HAP-1 (cell line): ENCODE measurements at regions of chr5 and their contacts with region 1.

Region 1: GRCh38 chr5:131165119-131165727 is at the start of gene HINT1:
- DNase-seq: peak; percentile 86 to 96
- H3K4me3 ChIP-seq: peak within 1 kb of the TSS; percentile 71
- H3K4me1 ChIP-seq: peaks cover 8% of the 10 kb centered on the region
- H3K27me3 ChIP-seq: no peaks in the 10 kb centered on the region

Region 2: DNA sequence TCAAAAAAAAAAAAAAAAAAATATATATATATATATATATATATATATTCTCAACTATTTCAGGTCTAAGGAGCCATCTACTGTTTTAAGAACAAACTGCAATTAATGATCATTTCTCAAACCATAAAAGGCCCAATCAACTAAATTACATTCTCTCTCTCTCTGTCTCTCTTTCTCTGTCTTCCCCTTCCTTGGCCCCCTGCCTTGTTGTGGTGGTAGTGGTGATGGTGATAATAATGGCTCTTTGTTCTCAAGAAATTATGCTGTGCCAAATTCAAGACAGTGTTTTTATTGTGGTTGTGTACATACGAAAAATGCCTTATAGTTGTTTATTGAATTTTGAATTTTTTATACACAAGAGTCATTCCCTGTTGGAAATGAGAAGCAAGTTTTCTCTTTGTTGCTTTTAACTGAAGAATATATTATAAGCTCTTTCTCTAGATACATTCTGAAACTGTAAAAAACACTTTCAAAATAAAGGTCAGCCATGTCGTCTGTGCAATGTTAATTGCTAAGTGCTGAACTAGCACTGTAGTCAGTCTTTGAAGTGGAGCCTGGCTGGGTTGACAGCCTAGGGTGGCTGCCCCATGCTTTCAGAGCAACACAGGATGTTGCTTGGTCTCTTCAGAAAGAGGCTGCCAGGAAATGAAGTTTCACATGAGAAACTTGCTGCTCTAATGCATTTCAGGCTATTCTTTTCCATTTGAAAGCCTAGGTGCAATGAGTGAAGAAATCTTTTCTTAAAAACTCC is 96.2 kb before region 1 on chr5:
- in situ Hi-C with region 1: no loop called
- DNase-seq: no peak
- H3K4me3 ChIP-seq: no peak overlapping the region
- H3K4me1 ChIP-seq: no peaks in the 10 kb centered on the region
- H3K27me3 ChIP-seq: no peaks in the 10 kb centered on the region

Region 3: GRCh38 chr5:131081374-131081773 is 83.8 kb before region 1 on chr5:
- in situ Hi-C with region 1: no loop called
- DNase-seq: no peak
- H3K4me3 ChIP-seq: no peak overlapping the region
- H3K4me1 ChIP-seq: peaks cover 3% of the 10 kb centered on the region; the same call in 1 of the 2 replicates
- H3K27me3 ChIP-seq: peaks cover 10% of the 10 kb centered on the region

Region 4: DNA sequence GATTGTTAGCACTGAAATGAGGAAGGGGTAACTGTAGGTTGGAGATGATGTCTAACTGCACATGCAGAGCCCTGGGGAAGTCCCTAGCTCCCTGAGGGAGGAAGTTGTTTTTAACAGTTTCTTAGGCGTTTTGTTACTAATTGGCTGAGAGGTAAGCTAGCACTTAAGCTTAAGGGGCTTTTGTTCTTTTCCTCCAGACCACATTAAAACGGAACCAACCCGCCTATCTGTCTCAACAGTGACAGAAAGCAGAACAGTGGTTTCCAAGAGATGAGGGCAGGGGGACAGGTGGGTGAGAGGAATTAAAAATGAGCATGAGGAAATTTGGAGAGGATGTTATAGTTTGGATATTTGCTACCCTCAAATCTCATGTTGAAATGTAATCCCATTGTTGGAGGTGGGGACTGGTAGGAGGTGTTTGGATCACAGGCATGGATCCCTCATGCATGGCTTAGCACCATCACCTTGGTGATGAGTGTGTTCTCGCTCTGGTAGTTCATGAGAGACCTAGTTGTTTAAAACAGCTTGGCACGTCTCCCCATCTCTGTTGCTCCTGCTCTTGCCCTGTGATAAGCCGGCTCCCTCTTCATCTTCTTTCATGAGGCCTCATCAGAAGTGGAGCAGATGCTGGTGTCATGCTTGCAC is 44.4 kb after region 1 on chr5:
- in situ Hi-C with region 1: no loop called
- DNase-seq: no peak
- H3K4me3 ChIP-seq: no peak overlapping the region
- H3K4me1 ChIP-seq: peaks cover 15% of the 10 kb centered on the region
- H3K27me3 ChIP-seq: no peaks in the 10 kb centered on the region

Region 5: GRCh38 chr5:131382407-131383395 is 217.5 kb after region 1 on chr5:
- in situ Hi-C with region 1: loop called (anchors 25 kb)
- DNase-seq: peak; percentile 51 to 71
- H3K4me3 ChIP-seq: no peak overlapping the region
- H3K4me1 ChIP-seq: no peaks in the 10 kb centered on the region; the same call in 1 of the 2 replicates
- H3K27me3 ChIP-seq: no peaks in the 10 kb centered on the region

Region 6: GRCh38 chr5:132354381-132355139 is 1189.3 kb after region 1 on chr5:
- in situ Hi-C with region 1: no loop called
- DNase-seq: no peak
- H3K4me3 ChIP-seq: no peak overlapping the region
- H3K4me1 ChIP-seq: no peaks in the 10 kb centered on the region
- H3K27me3 ChIP-seq: no peaks in the 10 kb centered on the region